ENCODE measurements at regions of chr2 and their contacts with region 1.

Region 1: DNA sequence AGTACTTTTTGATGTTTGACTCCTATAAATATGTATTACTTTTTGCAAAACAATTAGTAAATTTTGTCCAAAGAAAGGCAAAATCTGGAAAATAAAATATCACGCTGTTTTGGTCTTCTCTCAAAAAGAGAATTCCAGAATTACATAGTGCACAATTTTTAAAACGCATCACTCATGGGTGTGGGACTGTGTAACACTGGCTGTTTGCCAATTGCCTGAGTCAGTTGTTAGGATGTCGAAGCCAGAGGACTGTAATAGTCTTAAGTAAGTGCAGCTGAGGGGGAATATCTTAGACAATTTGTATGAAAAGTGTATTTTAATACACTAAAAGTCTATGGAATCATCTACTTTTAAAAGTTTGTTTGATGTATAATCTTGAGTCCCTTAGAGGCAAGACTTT is 24.1 kb upstream of the EPHA4 start:
- ATAC-seq: peak in 2 of 8 experiments; percentile 93
- H3K4me3 ChIP-seq: no peak overlapping the region
- H3K27ac ChIP-seq: no peak overlapping the region
- H3K4me1 ChIP-seq: peaks cover 0 to 11% of the 10 kb centered on the region in 2 donors

Region 2: DNA sequence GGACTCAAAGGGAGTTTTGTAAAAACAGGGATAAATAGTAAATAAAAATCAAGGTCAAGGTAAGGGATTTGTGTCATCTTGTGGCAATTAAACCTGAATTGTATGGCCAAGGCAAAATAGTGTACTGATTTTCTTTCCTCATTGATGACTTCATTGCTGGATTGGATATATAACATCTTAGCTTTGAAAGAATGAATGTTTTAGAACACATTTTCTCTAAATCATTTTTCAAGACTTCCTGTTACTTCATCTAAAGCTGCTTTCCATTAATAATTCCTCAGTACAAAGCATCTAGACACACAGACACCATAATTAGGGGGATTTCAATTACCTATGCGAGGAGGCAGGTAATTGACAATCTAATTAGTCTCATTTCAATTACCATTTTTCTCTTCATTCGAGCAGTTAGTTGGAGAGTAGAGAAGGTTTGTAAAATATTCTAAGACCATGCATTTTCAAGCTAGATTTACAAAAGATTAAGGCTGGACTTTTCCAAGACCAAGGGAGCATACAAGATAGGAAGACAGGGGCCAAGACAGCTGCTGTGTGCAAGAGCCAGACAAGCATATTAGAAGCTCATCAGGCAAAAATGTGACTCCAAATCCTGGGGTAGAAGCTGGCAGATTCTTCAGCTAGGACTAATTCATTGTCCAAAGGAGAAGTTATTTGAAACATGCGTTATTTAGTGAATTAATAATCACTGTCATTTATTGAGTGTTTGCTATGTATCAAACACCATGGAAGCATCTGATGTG is 277.6 kb before region 1 on chr2:
- in situ Hi-C with region 1: no loop called
- ATAC-seq: no peak
- H3K4me3 ChIP-seq: no peak overlapping the region
- H3K27ac ChIP-seq: no peak overlapping the region
- H3K4me1 ChIP-seq: peaks cover 3 to 13% of the 10 kb centered on the region in 2 donors

Region 3: DNA sequence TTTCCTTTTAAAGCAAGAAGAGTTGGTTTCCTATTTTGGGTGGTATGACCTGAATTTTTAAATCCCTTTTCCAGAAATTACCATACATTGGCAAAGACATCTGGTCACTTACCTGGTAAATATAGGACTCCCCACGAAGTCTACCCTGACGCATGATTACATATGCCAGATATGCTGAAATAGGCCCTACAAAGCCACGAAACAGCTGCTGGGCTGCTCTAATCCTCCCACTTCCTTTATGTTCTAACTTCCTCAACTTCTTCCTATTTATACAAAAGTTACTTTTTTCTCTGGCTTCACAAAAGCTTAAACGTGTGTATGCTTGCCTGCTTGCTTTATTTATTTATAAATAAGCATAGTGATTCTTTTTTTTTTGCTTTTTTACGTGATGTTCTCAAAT is 161.9 kb after region 1 on chr2:
- in situ Hi-C with region 1: no loop called
- ATAC-seq: no peak
- H3K4me3 ChIP-seq: no peak overlapping the region
- H3K27ac ChIP-seq: no peak overlapping the region
- H3K4me1 ChIP-seq: no peaks in the 10 kb centered on the region

Region 4: GRCh38 chr2:221969087-221969829 is 373.1 kb after region 1 on chr2:
- in situ Hi-C with region 1: loop called in 4 of 9 experiments (anchors 25 kb)
- ATAC-seq: peak in 6 of 8 experiments; percentile 60 to 80 (median 68)
- H3K4me3 ChIP-seq: no peak overlapping the region
- H3K27ac ChIP-seq: no peak overlapping the region
- H3K4me1 ChIP-seq: peaks cover 8 to 19% of the 10 kb centered on the region in 2 donors

Measured in motor neuron (in vitro differentiated cells).